ENCODE measurements at regions of chr2 and their contacts with region 1.

Region 1: DNA sequence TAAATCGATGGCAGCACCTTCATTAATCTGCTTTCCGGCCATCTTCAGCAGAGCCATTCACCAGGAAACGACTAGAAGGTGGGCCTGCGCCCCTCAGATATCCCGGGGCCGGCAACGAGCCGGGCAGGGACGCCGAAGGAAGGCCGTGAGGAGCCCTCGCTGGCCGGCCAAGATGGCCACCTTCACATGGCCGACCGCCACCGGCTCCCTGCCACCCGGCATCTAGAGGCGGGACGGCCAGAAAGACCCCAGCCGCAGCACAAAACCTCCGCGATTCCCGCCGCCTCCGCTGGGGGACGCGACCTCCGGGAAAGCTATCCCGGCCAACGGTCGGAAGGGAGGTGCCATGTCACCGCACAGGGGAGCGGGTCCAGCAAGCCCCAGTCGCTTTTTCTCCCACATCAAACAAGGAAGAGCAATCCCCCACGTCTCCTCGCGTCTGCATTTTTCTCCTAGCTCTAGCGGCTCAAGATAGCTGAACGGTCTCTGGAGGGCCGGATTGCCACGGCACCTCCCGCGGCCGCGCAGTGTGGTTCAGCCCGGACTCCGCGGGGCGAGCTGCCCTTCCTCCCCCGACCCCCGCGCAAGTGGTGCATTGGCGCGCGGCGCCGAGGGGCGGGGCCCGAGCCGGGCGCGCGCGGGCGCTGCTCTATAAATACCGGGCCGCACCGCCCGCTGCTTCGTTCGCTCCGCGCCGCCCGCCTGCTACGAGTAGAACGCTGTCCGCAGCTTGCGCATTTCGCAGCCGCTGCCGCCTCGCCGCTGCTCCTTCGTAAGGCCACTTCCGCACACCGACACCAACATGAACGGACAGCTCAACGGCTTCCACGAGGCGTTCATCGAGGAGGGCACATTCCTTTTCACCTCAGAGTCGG is at the start of gene MAT2A:
- DNase-seq: peak; percentile 91

Region 2: DNA sequence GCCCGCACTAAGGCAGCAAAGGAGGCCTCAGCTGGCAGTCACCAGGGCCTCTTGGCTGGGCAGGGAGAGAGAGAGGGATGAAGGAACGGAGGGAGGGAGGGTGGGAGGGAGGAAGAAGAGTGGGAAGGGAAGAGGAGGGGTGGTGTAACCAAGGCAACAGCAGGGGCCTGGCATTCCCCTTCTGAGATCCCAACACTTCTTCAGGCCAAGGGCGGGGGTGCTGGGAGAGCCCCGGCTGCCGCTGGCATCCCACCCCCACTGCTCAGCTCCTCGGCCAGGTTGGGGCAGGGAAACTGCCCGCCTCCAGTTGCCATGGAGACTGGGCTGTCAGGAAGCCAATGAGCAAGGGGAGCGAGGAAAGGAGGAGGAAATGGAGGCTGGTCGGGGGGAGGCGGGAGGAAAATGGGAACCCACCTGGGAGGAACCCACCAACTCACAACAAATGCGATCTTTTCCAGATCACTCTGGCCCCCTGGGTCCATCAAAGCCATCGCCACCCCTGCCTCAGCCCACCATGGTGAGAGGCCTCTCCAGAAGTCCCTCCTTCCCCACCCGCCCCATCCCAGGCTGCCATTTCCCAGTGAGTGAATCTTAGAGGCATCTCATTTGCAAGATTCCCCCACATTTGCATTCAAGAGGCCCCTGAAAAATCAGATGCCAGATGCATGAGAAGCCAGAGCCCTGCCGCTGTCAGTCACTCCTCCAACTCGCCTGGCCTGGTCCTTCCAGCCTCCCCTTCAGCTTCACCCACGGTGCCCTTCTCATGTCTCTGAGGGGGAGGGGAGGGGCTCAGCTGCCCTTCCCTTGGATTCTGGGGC is 107.8 kb before region 1 on chr2:
- CTCF ChIA-PET with region 1: no interaction called
- POLR2A ChIA-PET with region 1: interaction called, 27 read pairs
- DNase-seq: no peak

Region 3: GRCh38 chr2:85445316-85446295 is 93.1 kb before region 1 on chr2:
- CTCF ChIA-PET with region 1: interaction called, 4 read pairs
- POLR2A ChIA-PET with region 1: interaction called, 35 read pairs
- DNase-seq: no peak

Region 4: GRCh38 chr2:85551698-85552678 is 13.3 kb after region 1 on chr2:
- CTCF ChIA-PET with region 1: interaction called, 6 read pairs
- POLR2A ChIA-PET with region 1: interaction called, 81 read pairs
- DNase-seq: peak; percentile 71

Region 5: DNA sequence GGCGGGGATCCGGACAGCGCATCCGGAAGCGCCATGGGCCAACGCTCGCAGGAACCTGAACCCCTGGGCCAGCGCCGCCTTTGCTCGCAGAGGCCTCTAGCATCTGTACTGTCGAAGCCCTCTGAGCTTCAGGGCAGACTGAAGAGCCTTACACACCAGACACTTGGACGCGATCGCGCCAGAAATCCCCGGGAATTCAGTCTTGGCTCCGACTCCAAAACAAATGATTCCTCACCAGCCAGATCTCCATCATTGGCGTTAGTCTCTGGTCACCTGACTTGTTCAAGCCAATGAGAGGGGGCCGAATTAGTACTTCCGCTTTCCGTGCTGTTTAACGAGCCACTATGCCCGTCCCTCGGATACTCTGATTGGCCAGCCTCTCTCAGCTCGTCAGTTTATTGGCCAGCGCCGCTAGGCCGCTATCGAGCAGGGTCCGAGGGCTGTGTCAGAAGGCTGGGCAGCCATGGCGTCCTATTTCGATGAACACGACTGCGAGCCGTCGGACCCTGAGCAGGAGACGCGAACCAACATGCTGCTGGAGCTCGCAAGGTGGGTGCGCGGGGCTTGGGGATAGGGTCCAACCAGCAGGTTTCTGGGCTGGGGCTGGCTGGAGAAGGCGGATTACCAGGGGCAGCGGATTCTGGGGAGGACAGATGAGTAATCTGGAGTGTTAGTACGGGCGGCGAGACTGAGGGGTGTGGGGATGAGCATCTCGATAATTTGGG is 56.7 kb after region 1 on chr2 and contains the start of gene RNF181:
- CTCF ChIA-PET with region 1: no interaction called
- POLR2A ChIA-PET with region 1: interaction called, 13 read pairs
- DNase-seq: peak; percentile 94

Measured in HEK293T (cell line).